Activated CD8-positive, alpha-beta T cell treated with anti-CD3 and anti-CD28 coated beads, Interleukin-2, amount 10 ng/mL, durations not matched to agents 7 days and 5 days (primary cell): ENCODE measurements at regions of chr1 and their contacts with region 1.

Region 1: GRCh38 chr1:54287176-54287650 is 87.2 kb downstream of the MRPL37 start:
- DNase-seq: peak; percentile 94
- ATAC-seq: peak; percentile 77
- H3K4me3 Mint-ChIP-seq: peak overlapping the region; percentile 86
- H3K27ac Mint-ChIP-seq: peak overlapping the region; percentile 93
- H3K4me1 Mint-ChIP-seq: peaks cover 97% of the 10 kb centered on the region
- H3K27me3 Mint-ChIP-seq: no peaks in the 10 kb centered on the region

Region 2: GRCh38 chr1:54199765-54200518 is 87.3 kb before region 1 on chr1 and contains the starts of genes CYB5RL and MRPL37:
- CTCF ChIA-PET with region 1: interaction called, 3 read pairs
- POLR2A ChIA-PET with region 1: interaction called, 16 read pairs
- DNase-seq: peak; percentile 95
- ATAC-seq: peak; percentile 97
- H3K4me3 Mint-ChIP-seq: peak within 1 kb of the TSS; percentile 87
- H3K27ac Mint-ChIP-seq: peak within 1 kb of the TSS; percentile 79
- H3K4me1 Mint-ChIP-seq: peaks cover 34% of the 10 kb centered on the region
- H3K27me3 Mint-ChIP-seq: no peaks in the 10 kb centered on the region
- total RNA-seq, gene CYB5RL: 13.1 to 15.5 TPM
- total RNA-seq, gene MRPL37: 115 TPM

Region 3: DNA sequence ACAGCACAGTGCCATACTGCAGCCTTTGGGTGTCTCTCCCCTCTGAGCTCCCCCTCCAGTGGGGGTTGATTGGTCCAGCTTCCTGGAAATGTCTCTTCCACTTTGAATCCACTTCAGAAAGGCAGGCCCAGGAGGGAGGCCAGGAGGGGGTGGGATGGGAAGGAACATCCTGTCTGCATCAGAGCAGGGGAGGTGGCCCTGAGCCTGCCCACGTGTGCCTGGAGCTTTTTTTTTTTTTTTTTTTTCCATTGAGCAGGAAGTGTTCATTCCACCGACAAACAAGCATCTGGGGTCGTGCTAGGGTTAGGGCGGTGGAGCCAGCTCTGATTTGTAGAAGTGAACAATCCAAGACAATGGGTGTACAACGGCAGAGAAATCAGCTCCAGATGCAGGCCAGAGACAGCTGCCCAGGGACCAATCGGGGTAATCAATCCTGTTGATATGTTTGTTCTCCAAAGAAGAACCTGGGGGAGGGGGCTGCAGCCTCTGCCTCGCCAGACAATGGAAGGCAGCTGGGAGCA is 25.6 kb after region 1 on chr1:
- CTCF ChIA-PET with region 1: interaction called, 4 read pairs
- POLR2A ChIA-PET with region 1: interaction called, 11 read pairs
- DNase-seq: peak; percentile 27
- ATAC-seq: peak; percentile 55
- H3K4me3 Mint-ChIP-seq: peak overlapping the region; percentile 19
- H3K27ac Mint-ChIP-seq: peak overlapping the region; percentile 66
- H3K4me1 Mint-ChIP-seq: peaks cover 65% of the 10 kb centered on the region
- H3K27me3 Mint-ChIP-seq: no peaks in the 10 kb centered on the region